PC-3 (cell line): ENCODE measurements at regions of chr4 and their contacts with region 1.

Region 1: GRCh38 chr4:154506253-154506652 is 14.7 kb upstream of the DCHS2 start:
- DNase-seq: peak; percentile 45
- ATAC-seq: peak; percentile 48
- H3K4me3 ChIP-seq: no peak overlapping the region
- H3K27ac ChIP-seq: peak overlapping the region; percentile 37
- H3K4me1 ChIP-seq: peaks cover 21% of the 10 kb centered on the region
- H3K27me3 ChIP-seq: peaks cover 12% of the 10 kb centered on the region; the same call in 1 of the 2 replicates
- CTCF ChIP-seq: peak; percentile 65

Region 2: GRCh38 chr4:154329268-154329868 is 176.9 kb before region 1 on chr4:
- CTCF ChIA-PET with region 1: no interaction called
- POLR2A ChIA-PET with region 1: no interaction called
- intact Hi-C with region 1: loop called (anchors 5 kb)
- DNase-seq: peak; percentile 59
- ATAC-seq: peak; percentile 58
- H3K4me3 ChIP-seq: no peak overlapping the region
- H3K27ac ChIP-seq: no peak overlapping the region
- H3K4me1 ChIP-seq: no peaks in the 10 kb centered on the region
- H3K27me3 ChIP-seq: peaks cover 33% of the 10 kb centered on the region
- CTCF ChIP-seq: peak; percentile 54

Region 3: DNA sequence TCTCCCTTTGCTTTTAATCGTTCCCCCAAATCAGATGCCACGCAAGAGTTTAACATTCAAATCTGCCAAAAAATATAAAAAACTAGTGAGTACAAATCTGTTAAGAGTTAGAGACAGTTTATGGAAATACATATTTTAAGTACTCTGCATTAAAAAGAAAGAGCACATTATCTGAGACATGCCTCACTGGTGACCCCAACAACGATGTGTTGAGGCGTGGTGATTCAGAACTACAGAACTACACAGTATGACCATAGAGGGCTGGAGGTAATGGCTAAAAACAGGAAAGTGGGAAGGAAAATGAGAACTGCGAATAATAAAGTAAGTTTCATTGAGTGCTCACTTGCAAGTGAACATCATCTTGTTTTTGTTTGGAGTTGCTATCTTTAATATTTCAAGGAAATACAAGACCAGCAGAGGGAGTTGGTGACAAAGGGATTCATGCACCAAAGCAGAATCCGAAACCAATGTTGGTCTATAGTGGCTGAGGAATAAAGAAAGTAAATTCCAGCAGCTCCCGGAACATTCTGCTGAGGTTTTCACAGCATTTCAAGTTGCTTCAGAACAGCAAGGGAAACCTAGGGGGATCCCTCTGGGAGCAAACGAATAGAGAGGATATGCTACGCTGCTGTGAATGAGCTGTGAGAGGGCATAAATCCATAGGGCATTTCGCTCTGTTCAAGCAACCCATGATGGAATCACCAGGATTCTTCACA is 106.8 kb before region 1 on chr4:
- CTCF ChIA-PET with region 1: interaction called, 5 read pairs
- POLR2A ChIA-PET with region 1: no interaction called
- intact Hi-C with region 1: loop called (anchors 1 kb)
- DNase-seq: peak; percentile 61
- ATAC-seq: peak; percentile 73
- H3K4me3 ChIP-seq: peak overlapping the region; percentile 61
- H3K27ac ChIP-seq: no peak overlapping the region
- H3K4me1 ChIP-seq: no peaks in the 10 kb centered on the region
- H3K27me3 ChIP-seq: peaks cover 23% of the 10 kb centered on the region
- CTCF ChIP-seq: peak; percentile 59

Region 4: DNA sequence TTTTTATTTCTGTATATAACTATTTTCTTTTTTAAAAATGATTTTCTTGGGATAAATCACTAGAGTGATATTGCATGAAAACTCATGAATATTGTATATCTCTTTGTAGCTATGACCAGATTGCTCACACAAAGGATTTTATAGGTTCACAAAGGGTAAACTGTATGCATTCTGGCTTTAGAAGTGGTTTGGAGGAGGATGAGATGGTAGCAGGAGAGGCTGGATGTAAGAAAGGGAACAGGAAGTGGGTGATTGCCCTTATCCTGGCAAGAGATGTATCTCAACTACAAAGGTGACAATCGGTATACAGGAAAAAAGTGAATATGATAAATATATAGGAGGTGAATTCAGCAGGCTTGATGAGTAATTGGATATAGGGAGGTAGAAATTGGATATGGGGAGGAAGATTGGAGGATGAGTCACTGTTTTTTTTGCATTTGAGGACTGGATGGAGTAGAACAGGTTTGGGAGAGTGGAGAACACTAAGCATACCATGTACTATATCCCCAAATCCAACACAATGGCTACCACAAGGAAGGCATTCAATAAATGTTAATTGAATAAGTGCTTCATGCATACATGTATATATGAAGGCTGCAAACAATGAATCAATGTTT is 96.3 kb after region 1 on chr4:
- CTCF ChIA-PET with region 1: no interaction called
- POLR2A ChIA-PET with region 1: no interaction called
- intact Hi-C with region 1: no loop called
- DNase-seq: peak; percentile 81
- ATAC-seq: peak; percentile 92
- H3K4me3 ChIP-seq: no peak overlapping the region
- H3K27ac ChIP-seq: peak overlapping the region; percentile 44; the same call in 1 of the 2 replicates
- H3K4me1 ChIP-seq: peaks cover 30% of the 10 kb centered on the region
- H3K27me3 ChIP-seq: no peaks in the 10 kb centered on the region
- CTCF ChIP-seq: no peak